Dorsolateral prefrontal cortex (tissue), 120 donors: ENCODE measurements at regions of chr14 and their contacts with region 1.

Region 1: GRCh38 chr14:105700622-105701288 is 174.4 kb downstream of the TMEM121 start:
- DNase-seq: peak in 1 of 10 donors; percentile 6
- H3K4me3 ChIP-seq: no peak overlapping the region
- H3K27ac ChIP-seq: no peak overlapping the region
- H3K27me3 ChIP-seq: peaks cover 0 to 3% (median 0%) of the 10 kb centered on the region in 45 donors
- CTCF ChIP-seq: no peak

Region 2: DNA sequence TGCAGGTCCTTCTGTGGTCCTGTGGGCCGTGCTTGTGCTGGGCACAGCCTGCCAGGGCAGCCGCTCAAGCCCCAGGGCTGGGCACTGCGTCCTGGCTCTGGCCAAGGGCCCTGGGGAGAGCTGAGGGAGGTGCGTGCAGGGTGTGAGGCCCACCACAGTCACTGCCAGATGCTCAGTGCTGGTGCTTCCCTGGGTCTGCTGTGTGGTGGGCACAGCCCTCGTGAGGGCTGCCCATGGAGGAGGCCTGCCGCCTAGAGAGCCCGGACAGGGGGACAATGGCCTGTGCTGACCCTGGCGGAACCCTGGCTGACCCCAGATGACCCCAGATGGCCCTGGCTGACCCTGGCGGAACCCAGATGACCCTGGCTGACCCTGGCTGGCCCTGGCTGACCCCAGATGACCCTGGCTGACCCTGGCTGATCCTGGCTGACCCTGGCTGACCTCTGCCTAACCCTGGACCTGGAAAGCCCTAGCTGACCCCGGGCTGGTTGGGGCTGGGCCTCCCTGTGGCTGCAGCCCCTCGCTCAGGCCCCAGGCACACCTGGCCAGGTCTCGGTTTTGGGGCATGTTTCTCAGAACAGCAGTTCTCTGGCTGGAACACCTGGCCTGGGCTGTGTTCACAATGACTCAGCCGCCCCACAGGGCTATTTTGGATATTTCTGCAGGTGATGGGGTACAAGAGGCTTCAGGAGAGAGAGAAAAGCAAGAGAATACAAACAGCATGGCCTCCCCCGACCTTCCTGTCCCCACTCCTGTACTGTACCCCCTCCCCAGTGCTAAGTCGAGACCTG is 119.0 kb before region 1 on chr14:
- intact Hi-C with region 1: loop called (anchors 2 to 5 kb)
- DNase-seq: peak in 1 of 10 donors; percentile 26
- H3K4me3 ChIP-seq: no peak overlapping the region
- H3K27ac ChIP-seq: no peak overlapping the region
- H3K27me3 ChIP-seq: no peaks in the 10 kb centered on the region
- CTCF ChIP-seq: no peak